HepG2 (cell line): ENCODE measurements at regions of chr12 and their contacts with region 1.

Region 1: DNA sequence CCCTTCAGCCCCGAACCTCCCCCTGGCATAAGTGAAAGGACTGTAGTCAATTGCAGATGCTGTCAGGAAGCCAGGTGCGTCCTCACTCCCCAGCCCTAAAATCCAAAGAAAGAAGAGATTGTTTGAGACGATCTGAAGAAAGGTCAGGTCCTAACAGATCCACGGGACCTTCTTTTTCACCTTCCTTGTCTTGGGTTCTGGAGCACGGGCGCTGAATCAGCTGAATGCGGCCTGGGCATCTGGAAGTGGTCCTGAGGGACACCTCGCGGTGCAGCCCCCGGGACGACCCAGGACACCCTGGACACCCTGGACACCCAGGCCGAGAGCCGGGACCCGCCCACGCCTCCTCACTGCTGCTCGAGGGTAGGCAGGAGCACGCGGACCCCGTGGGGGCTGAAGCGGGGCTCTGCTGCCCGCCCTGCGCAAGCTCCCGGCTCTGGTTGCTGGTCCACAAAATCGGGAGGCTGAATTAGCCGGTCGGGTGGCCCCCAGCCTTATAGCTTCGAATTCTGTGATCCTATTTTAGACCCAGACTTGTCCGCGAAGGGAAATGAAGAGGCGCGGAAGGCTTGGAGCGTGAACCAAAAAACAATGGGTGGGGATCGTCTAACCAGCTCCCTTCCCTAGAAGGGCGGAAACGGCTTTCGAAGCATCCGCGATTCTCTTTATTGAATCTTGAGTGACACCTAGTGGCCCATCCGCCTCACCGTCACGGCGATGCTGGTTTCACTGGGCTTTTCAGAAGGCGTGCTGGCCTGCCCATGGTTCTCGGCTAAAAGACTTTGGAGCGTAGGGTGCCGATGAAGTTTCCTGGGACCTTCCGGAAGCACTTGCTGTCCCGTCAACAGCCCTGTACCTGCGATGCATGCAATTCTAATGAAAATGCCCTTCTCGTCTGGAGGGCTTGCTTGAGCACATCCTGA is 46.4 kb upstream of the PLXNC1 start:
- DNase-seq: peak; percentile 71
- ATAC-seq: peak; percentile 87
- H3K4me3 ChIP-seq: peak overlapping the region; percentile 49 to 76 (median 55)
- H3K27ac ChIP-seq: no peak overlapping the region
- H3K4me1 ChIP-seq: peaks cover 41% of the 10 kb centered on the region
- H3K27me3 ChIP-seq: peaks cover 0 to 15% of the 10 kb centered on the region in 2 experiments; a peak in 2 of 5 replicates
- CTCF ChIP-seq: peak; percentile 94
- EP300 ChIP-seq: no peak
- POLR2A ChIP-seq: no peak
- RAD21 ChIP-seq: peak; percentile 83

Region 2: DNA sequence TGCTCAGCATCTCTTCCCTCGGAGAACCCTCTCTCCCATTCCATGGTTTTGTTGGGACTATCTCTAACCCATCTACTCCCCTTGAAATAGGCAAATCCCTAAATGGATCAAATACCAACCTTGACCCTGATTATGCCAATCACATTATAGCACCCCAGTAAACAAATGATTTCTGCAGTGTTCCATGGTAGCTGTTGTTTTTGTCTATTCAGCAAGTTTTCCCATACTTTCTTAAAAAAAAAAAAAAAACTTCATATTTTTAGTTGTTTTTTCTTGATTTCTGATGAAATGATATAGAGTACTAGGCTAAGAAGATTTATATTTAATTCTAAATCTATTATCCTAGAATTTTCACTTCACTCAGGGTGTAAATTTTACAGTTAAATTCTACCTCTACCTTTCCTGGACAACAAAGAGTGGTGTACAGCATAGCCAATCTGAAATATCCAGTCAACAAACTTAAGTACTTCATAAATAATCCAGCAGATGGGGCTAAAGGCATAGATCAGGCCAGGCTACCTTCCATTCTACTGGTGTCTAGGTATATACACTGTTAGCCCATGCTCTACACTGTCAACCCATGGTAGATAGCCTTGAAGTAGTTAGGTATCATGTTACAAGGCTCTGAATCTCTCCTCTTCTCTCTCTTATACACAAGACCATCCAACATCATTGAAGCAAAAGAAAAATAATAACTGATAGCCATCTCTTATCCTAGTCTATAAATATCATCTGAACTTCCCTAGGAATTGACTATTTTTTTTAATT is 1317.0 kb before region 1 on chr12:
- CTCF ChIA-PET with region 1: no interaction called
- POLR2A ChIA-PET with region 1: no interaction called
- in situ Hi-C with region 1: no loop called
- intact Hi-C with region 1: loop called (anchors 10 kb)
- DNase-seq: peak; percentile 85
- ATAC-seq: peak; percentile 100
- H3K4me3 ChIP-seq: no peak overlapping the region
- H3K27ac ChIP-seq: no peak overlapping the region
- H3K4me1 ChIP-seq: no peaks in the 10 kb centered on the region
- H3K27me3 ChIP-seq: no peaks in the 10 kb centered on the region
- CTCF ChIP-seq: peak; percentile 85
- EP300 ChIP-seq: no peak
- POLR2A ChIP-seq: no peak
- RAD21 ChIP-seq: peak; percentile 75

Region 3: DNA sequence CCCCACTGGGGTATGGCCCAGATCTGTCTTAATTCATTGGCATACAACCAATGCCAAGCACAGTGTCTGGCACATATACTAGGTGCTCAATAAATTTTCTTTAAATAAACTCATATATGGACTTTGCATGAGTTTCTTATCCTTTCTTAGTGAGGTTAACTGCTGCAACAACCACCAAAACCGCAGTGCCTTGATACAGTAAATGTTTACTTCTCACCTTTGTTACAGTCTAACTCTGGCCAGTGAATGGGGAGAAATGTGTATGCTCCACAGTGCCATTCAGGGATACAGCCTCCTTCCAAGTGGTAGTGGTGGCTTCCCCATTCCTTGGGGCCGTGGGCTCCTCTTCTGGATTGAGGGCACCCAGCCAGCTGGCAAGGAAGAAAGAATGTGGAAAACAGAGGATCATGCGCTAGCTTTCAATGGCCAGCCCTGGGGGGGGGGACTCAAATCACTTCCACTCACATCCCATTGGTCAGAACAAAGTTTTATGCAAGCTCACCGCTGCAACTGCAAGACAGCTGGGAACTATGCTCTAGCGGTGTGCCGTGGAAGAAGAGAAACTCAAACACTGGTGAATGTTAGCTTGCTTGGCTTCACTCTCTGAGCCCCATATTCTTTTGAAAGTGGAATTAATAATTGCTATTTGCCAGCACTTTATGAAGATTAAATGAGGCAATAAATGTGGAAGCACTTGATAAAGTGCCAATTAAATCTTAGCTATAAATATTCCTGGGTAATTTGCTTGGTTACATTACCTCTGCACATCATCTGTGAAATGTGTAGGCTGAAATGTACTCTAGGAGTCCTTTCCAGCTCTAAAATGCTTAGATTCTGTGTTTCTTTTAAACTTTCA is 580.5 kb before region 1 on chr12:
- CTCF ChIA-PET with region 1: interaction called, 11 read pairs
- POLR2A ChIA-PET with region 1: no interaction called
- in situ Hi-C with region 1: loop called (anchors 5 kb)
- intact Hi-C with region 1: loop called (anchors 1 kb)
- DNase-seq: no peak
- ATAC-seq: no peak
- H3K4me3 ChIP-seq: no peak overlapping the region
- H3K27ac ChIP-seq: no peak overlapping the region
- H3K4me1 ChIP-seq: peaks cover 18% of the 10 kb centered on the region
- H3K27me3 ChIP-seq: no peaks in the 10 kb centered on the region; a peak in 1 of 5 replicates
- CTCF ChIP-seq: no peak
- EP300 ChIP-seq: no peak
- POLR2A ChIP-seq: no peak
- RAD21 ChIP-seq: no peak

Region 4: GRCh38 chr12:93569656-93570551 is 532.1 kb before region 1 on chr12:
- CTCF ChIA-PET with region 1: interaction called, 5 read pairs
- POLR2A ChIA-PET with region 1: interaction called, 7 read pairs
- in situ Hi-C with region 1: loop called (anchors 5 kb)
- intact Hi-C with region 1: loop called (anchors 1 kb)
- DNase-seq: peak; percentile 80
- ATAC-seq: peak; percentile 62
- H3K4me3 ChIP-seq: peak overlapping the region; percentile 64 to 81 (median 71)
- H3K27ac ChIP-seq: no peak overlapping the region
- H3K4me1 ChIP-seq: peaks cover 24% of the 10 kb centered on the region
- H3K27me3 ChIP-seq: peaks cover 3 to 24% of the 10 kb centered on the region in 2 experiments; a peak in 4 of 5 replicates
- CTCF ChIP-seq: peak; percentile 77
- EP300 ChIP-seq: peak in 1 of 2 experiments; percentile 31; a peak in 2 of 4 replicates
- POLR2A ChIP-seq: no peak
- RAD21 ChIP-seq: peak; percentile 59

Region 5: GRCh38 chr12:93759512-93760081 is 342.4 kb before region 1 on chr12:
- CTCF ChIA-PET with region 1: no interaction called
- POLR2A ChIA-PET with region 1: no interaction called
- in situ Hi-C with region 1: no loop called
- intact Hi-C with region 1: loop called (anchors 5 kb)
- DNase-seq: peak; percentile 66
- ATAC-seq: peak; percentile 83
- H3K4me3 ChIP-seq: peak overlapping the region in 1 of 3 experiments; percentile 20; a peak in 2 of 6 replicates
- H3K27ac ChIP-seq: peak overlapping the region; percentile 69
- H3K4me1 ChIP-seq: peaks cover 46% of the 10 kb centered on the region
- H3K27me3 ChIP-seq: no peaks in the 10 kb centered on the region
- CTCF ChIP-seq: no peak
- EP300 ChIP-seq: peak in 1 of 2 experiments; percentile 56; a peak in 2 of 4 replicates
- POLR2A ChIP-seq: no peak
- RAD21 ChIP-seq: no peak

Region 6: GRCh38 chr12:93990832-93991803 is 110.9 kb before region 1 on chr12:
- CTCF ChIA-PET with region 1: no interaction called
- POLR2A ChIA-PET with region 1: no interaction called
- in situ Hi-C with region 1: loop called (anchors 10 kb)
- intact Hi-C with region 1: loop called (anchors 5 kb)
- DNase-seq: peak; percentile 45
- ATAC-seq: peak; percentile 100
- H3K4me3 ChIP-seq: peak overlapping the region in 1 of 3 experiments; percentile 11; a peak in 1 of 6 replicates
- H3K27ac ChIP-seq: no peak overlapping the region
- H3K4me1 ChIP-seq: no peaks in the 10 kb centered on the region; the same call in 1 of the 2 replicates
- H3K27me3 ChIP-seq: no peaks in the 10 kb centered on the region; a peak in 1 of 5 replicates
- CTCF ChIP-seq: peak; percentile 82
- EP300 ChIP-seq: no peak
- POLR2A ChIP-seq: no peak
- RAD21 ChIP-seq: no peak; the same call in 1 of the 2 replicates